ENCODE measurements at regions of chr15 and their contacts with region 1.

Region 1: DNA sequence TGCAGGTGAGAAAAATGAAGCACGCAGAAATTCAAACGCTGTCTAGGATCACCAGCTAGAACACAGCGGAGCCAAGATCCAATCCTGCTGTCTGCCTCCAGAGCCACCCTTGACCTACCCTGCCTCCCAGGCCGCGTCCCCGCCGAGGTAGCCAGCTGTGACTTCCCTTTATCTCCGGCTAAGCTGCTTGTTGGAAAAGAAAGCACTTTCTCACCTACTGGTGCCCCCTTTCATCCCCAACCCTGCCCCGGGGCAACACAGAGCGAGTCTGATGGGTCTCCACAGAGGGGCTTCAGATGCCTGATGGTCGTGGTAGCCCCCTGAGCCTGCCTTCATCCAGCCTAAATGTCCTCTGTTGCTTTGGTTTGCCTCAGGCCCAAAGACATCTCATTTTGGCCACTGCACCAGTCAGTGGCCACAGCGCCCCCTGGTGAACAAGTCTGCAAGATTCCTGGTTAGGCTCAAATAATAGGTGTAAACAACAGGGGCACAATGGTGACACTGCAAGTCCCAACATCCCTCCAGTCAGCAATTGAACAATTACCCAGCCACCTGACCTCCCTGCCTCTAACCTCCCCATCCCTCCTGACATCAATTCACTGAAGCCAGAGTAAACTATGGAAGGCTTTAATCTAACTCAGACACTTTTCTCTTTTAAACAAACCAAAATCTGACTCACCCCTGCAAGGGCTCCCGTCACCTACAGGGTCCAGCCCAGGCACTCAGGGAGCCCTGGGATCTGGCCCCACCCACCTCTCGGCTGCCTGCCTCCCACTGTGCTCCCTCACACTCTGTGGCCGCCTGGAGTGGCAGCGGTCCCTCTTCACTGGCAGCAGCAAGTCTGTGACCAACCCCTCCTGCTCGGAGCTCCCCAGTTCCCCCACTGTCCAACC is 27.3 kb upstream of the BCL2L10 start:
- H3K4me3 Mint-ChIP-seq: no peak overlapping the region
- H3K27ac Mint-ChIP-seq: peak overlapping the region; percentile 42
- H3K4me1 Mint-ChIP-seq: peaks cover 50% of the 10 kb centered on the region
- H3K27me3 Mint-ChIP-seq: peaks cover 5% of the 10 kb centered on the region

Region 2: GRCh38 chr15:52078876-52079700 is 60.8 kb before region 1 on chr15:
- intact Hi-C with region 1: loop called (anchors 5 kb)
- H3K4me3 Mint-ChIP-seq: no peak overlapping the region
- H3K27ac Mint-ChIP-seq: no peak overlapping the region
- H3K4me1 Mint-ChIP-seq: peaks cover 50% of the 10 kb centered on the region
- H3K27me3 Mint-ChIP-seq: peaks cover 16% of the 10 kb centered on the region

Region 3: DNA sequence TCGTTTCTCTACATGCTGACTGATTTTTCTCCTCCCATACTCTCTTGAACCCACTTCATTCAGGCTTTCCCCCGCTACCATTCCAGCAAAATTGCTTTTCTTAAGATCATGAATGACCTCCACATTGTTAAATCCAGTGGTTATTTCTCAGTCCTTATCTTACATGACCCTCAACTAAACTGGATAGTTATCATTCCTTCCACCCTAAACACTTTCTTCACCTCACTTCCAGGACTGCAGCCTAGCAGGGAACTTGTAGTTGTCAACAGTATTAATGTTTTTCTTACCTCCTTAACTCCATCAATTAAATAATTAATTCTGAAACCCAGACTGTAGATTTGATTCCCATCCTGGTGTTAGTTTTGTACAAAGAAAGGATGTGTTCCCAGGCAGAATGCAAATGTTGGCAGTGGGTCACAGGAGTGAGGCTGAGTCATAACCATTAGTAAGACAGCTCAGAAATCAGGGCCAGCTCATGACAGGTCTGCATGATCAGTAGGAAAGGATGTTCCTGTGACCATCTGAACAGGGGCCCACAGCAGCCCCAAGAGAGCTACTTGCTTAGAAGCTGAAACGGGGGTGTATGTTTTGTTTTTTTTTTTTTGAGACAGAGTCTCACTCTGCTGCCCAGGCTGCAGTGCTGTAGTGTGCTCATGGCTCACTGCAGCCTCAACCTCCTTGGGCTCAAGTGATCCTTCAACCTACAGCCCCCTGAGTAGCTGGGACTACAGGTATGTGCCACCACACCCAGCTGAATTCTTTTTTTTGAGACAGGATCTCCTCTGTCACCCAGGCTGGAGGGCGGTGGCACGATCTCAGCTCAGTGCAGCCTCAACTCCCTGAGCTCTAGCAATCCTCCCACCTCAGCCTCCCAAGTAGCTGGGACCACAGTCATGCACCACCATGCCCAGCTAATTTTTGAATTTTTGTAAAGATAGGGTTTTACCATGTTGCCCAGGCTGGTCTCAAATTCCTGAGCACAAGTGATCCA is 36.3 kb before region 1 on chr15:
- intact Hi-C with region 1: loop called (anchors 5 kb)
- H3K4me3 Mint-ChIP-seq: no peak overlapping the region
- H3K27ac Mint-ChIP-seq: peak overlapping the region; percentile 33
- H3K4me1 Mint-ChIP-seq: peaks cover 23% of the 10 kb centered on the region
- H3K27me3 Mint-ChIP-seq: peaks cover 2% of the 10 kb centered on the region

Region 4: GRCh38 chr15:52124270-52124880 is 15.5 kb before region 1 on chr15:
- intact Hi-C with region 1: no loop called
- H3K4me3 Mint-ChIP-seq: no peak overlapping the region
- H3K27ac Mint-ChIP-seq: no peak overlapping the region
- H3K4me1 Mint-ChIP-seq: peaks cover 20% of the 10 kb centered on the region
- H3K27me3 Mint-ChIP-seq: no peaks in the 10 kb centered on the region

Region 5: GRCh38 chr15:52360229-52361203 is 220.7 kb after region 1 on chr15:
- intact Hi-C with region 1: no loop called
- H3K4me3 Mint-ChIP-seq: no peak overlapping the region
- H3K27ac Mint-ChIP-seq: peak overlapping the region; percentile 82
- H3K4me1 Mint-ChIP-seq: peaks cover 36% of the 10 kb centered on the region
- H3K27me3 Mint-ChIP-seq: no peaks in the 10 kb centered on the region

Measured in dendritic cell treated with granulocyte-macrophage colony-stimulating factor and Interleukin-4, amounts not matched to agents 40 ng/mL and 50 ng/mL, for 4 days (primary cell).